Esophagus muscularis mucosa (tissue), 4 donors: ENCODE measurements at regions of chr9 and their contacts with region 1.

Region 1: GRCh38 chr9:97038909-97039781 is at the start of gene CTSV:
- DNase-seq: peak; percentile 93
- H3K4me3 ChIP-seq: peak within 1 kb of the TSS; percentile 58 to 61 (median 60)
- H3K27ac ChIP-seq: peak within 1 kb of the TSS in 3 of 4 donors; percentile 24 to 42 (median 40)
- H3K4me1 ChIP-seq: peaks cover 7 to 15% (median 15%) of the 10 kb centered on the region in 4 donors
- H3K27me3 ChIP-seq: peaks cover 0 to 54% (median 3%) of the 10 kb centered on the region in 4 donors
- CTCF ChIP-seq: no peak
- EP300 ChIP-seq: no peak
- POLR2A ChIP-seq: no peak
- total RNA-seq, gene CTSV: not detected

Region 2: GRCh38 chr9:96854073-96854876 is 184.9 kb before region 1 on chr9 and contains the start of gene ZNF782:
- intact Hi-C with region 1: loop called (anchors 10 kb)
- DNase-seq: peak; percentile 98
- H3K4me3 ChIP-seq: peak within 1 kb of the TSS; percentile 76 to 85 (median 82)
- H3K27ac ChIP-seq: peak within 1 kb of the TSS; percentile 78 to 91 (median 87)
- H3K4me1 ChIP-seq: peaks cover 10 to 35% (median 33%) of the 10 kb centered on the region in 4 donors
- H3K27me3 ChIP-seq: no peaks in the 10 kb centered on the region
- CTCF ChIP-seq: peak in 2 of 3 experiments; percentile 11 to 23
- EP300 ChIP-seq: no peak
- POLR2A ChIP-seq: no peak
- total RNA-seq, gene ZNF782: 5.8 to 17.0 (median 7.5) TPM